GM12878 (cell line): ENCODE measurements at regions of chr17 and their contacts with region 1.

Region 1: GRCh38 chr17:75131280-75132017 is at the start of gene NT5C:
- DNase-seq: no peak
- ATAC-seq: peak; percentile 96
- H3K4me3 ChIP-seq: peak within 1 kb of the TSS; percentile 74
- H3K27ac ChIP-seq: peak within 1 kb of the TSS; percentile 82
- H3K4me1 ChIP-seq: peaks cover 14% of the 10 kb centered on the region
- H3K27me3 ChIP-seq: no peaks in the 10 kb centered on the region
- CTCF ChIP-seq: peak; percentile 72 to 74 (median 74); a peak in 5 of 6 replicates
- EP300 ChIP-seq: no peak; a peak in 1 of 4 replicates
- POLR2A ChIP-seq: peak; percentile 96
- RAD21 ChIP-seq: peak; percentile 34; the same call in 1 of the 2 replicates
- polyA plus RNA-seq, gene NT5C: 3.7 to 9.8 TPM

Region 2: DNA sequence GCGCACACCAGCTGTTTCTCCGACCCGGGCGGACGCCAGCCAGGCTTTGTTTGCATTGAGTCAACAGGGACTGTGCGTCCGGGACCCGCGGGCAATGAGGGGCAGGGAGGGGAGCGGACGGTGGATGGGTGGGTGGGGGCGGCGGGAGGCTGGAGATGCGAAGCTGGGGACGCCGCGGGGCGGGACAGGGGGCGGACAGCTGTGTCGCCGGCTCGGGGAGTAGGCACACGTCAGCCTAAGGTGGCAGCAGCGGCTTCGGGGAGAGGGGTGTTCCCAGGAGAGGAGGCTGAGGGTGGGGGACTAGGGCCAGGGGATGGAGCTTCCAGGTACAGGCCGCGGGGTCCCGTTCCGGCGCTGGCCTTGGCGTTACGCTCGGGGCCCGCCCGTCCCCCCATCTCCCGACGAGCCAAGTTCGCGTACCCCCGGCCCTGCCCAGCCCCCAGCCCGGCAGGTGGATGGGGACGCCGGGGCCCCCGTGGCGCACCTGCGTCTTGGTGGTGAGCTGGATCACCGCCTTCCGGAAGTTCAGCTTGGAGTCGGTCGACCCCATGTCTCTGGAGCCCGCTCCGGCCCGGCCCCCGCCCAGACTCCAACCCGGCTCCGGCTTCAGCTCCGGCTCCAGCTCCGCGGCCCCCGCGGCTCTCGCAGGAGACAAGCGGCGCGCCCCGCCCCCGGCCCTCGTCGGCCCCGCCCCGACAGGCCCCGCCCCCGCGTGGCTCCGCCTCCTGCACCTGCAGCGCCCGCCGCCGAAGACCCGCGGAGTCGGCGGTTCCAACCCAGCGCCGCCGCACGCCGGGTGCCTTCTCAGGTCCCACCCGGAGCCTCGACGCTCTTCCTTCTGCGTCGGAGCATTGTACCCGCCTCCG is 159.1 kb before region 1 on chr17 and contains the start of gene HID1:
- CTCF ChIA-PET with region 1: no interaction called
- POLR2A ChIA-PET with region 1: no interaction called
- RAD21 ChIA-PET with region 1: no interaction called
- SMC1A ChIA-PET with region 1: no interaction called
- in situ Hi-C with region 1: no loop called
- intact Hi-C with region 1: no loop called
- DNase-seq: no peak
- ATAC-seq: peak; percentile 90
- H3K4me3 ChIP-seq: 0 out of 2 replicates have a peak within 1 kb of the TSS, but pooled peaks have one; percentile 55
- H3K27ac ChIP-seq: no peak within 1 kb of the TSS
- H3K4me1 ChIP-seq: no peaks in the 10 kb centered on the region
- H3K27me3 ChIP-seq: peaks cover 7 to 11% of the 10 kb centered on the region in 2 experiments; a peak in 3 of 4 replicates
- CTCF ChIP-seq: no peak
- EP300 ChIP-seq: no peak
- POLR2A ChIP-seq: no peak; the same call in 1 of the 2 replicates
- RAD21 ChIP-seq: no peak
- polyA plus RNA-seq, gene HID1: not detected

Region 3: DNA sequence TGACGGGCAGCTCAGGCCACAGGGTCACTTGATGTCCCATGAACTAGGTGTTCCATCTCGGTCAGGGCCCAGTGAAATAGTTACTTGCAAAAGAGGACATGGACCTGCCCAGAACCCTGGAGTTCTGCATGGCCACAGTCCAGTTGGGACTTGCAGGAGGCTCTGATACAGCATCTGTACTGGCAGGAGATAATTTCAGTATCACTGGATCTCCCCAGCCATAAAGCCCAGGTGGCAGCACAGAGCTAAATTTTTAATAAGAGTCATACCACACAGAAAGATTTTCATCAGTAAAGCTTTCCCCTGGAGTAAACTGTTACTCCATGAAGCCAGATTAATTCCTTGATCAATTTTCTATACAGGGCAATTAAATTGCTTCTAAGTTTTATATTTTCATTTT is 61.7 kb before region 1 on chr17:
- CTCF ChIA-PET with region 1: interaction called, 25 read pairs
- POLR2A ChIA-PET with region 1: interaction called, 3 read pairs
- RAD21 ChIA-PET with region 1: interaction called, 5 read pairs
- SMC1A ChIA-PET with region 1: interaction called, 12 read pairs
- in situ Hi-C with region 1: no loop called
- intact Hi-C with region 1: no loop called
- DNase-seq: no peak
- ATAC-seq: peak; percentile 68
- H3K4me3 ChIP-seq: no peak overlapping the region
- H3K27ac ChIP-seq: no peak overlapping the region
- H3K4me1 ChIP-seq: peaks cover 15% of the 10 kb centered on the region
- H3K27me3 ChIP-seq: no peaks in the 10 kb centered on the region
- CTCF ChIP-seq: peak in 2 of 3 experiments; percentile 35 to 50; a peak in 4 of 6 replicates
- EP300 ChIP-seq: no peak
- POLR2A ChIP-seq: no peak
- RAD21 ChIP-seq: 0 out of 2 replicates have a peak, but pooled peaks have one; percentile 24